ENCODE measurements at regions of chr5 and their contacts with region 1.

Region 1: GRCh38 chr5:180007582-180007981 is 64.0 kb downstream of the RNF130 start:
- DNase-seq: no peak
- H3K4me3 ChIP-seq: no peak overlapping the region
- H3K27ac ChIP-seq: no peak overlapping the region
- H3K4me1 ChIP-seq: no peaks in the 10 kb centered on the region
- H3K27me3 ChIP-seq: no peaks in the 10 kb centered on the region
- CTCF ChIP-seq: no peak

Region 2: GRCh38 chr5:180018347-180019060 is 10.9 kb after region 1 on chr5:
- CTCF ChIA-PET with region 1: no interaction called
- POLR2A ChIA-PET with region 1: interaction called, 16 read pairs
- intact Hi-C with region 1: no loop called
- DNase-seq: no peak
- H3K4me3 ChIP-seq: no peak overlapping the region
- H3K27ac ChIP-seq: no peak overlapping the region
- H3K4me1 ChIP-seq: no peaks in the 10 kb centered on the region
- H3K27me3 ChIP-seq: no peaks in the 10 kb centered on the region
- CTCF ChIP-seq: no peak